ENCODE measurements at regions of chr1 and their contacts with region 1.

Region 1: DNA sequence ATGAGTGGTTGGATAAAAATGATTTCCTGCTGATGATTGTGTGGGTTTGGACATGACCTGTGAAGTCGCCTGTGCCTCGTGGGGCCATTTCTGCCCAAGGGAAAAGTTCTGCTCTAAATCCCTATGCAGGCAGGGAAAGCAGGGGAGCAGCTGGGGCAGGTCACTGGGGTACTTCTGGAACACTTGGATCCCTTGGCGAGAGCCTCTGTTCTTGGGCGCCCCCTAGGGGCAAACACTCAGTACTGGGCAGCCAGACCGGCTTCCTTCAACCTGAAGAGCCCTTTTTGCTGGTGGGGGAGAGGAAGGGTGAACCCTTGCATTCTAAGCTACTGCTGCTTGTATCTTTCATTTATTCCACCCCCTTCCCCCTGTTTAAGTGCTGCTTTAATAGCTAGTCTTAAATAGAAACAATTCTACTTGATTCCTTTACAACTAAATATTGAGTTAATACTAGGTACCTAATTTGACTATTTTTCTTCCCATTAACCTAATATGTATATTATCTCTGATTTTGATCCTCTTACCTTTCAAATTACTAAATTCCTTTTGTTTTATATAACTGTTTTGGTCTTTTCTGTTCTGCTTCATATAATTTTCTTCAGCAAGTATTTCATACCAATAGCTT is 5.1 kb upstream of the CLEC20A start:
- DNase-seq: peak; percentile 45 to 47
- ATAC-seq: peak; percentile 69 to 82 (median 70)
- H3K4me3 ChIP-seq: no peak overlapping the region
- H3K4me3 Mint-ChIP-seq: no peak overlapping the region
- H3K27ac ChIP-seq: no peak overlapping the region
- H3K27ac Mint-ChIP-seq: no peak overlapping the region
- H3K4me1 ChIP-seq: no peaks in the 10 kb centered on the region
- H3K4me1 Mint-ChIP-seq: peaks cover 0 to 5% of the 10 kb centered on the region in 2 donors
- H3K27me3 ChIP-seq: no peaks in the 10 kb centered on the region
- H3K27me3 Mint-ChIP-seq: peaks cover 3 to 8% of the 10 kb centered on the region in 2 donors
- CTCF ChIP-seq: peak; percentile 68

Region 2: DNA sequence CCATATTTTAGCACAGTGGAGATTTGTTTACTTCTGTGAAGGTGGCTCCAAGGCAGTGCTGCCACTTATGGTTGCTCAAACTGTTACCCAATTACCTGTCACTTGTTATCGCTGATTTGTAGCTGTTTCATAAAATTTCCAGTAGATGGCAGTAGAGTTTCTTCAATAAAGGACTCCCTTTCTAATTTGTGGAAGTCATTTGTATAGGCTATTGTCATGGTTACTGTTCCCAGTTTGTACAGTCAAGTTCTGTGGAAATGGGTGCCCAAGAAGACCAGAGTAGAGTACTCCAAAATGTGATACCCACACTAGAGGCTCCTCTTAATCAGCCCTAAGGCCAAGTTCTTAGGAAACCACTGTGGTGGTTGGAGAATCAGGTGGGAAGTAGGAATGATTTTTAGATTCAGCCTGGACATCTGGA is 191.1 kb before region 1 on chr1:
- intact Hi-C with region 1: loop called (anchors 2 kb)
- DNase-seq: peak in 1 of 2 donors; percentile 38
- ATAC-seq: peak in 2 of 3 donors; percentile 41 to 45
- H3K4me3 ChIP-seq: no peak overlapping the region
- H3K4me3 Mint-ChIP-seq: no peak overlapping the region
- H3K27ac ChIP-seq: no peak overlapping the region
- H3K27ac Mint-ChIP-seq: no peak overlapping the region
- H3K4me1 ChIP-seq: no peaks in the 10 kb centered on the region
- H3K4me1 Mint-ChIP-seq: no peaks in the 10 kb centered on the region
- H3K27me3 ChIP-seq: no peaks in the 10 kb centered on the region
- H3K27me3 Mint-ChIP-seq: peaks cover 4 to 13% of the 10 kb centered on the region in 2 donors
- CTCF ChIP-seq: peak; percentile 62

Measured in natural killer cell (primary cell).